ENCODE measurements at regions of chr4 and their contacts with region 1.

Region 1: GRCh38 chr4:121736735-121737351 is 28.1 kb downstream of the SMIM43 start:
- DNase-seq: peak in 1 of 4 donors; percentile 46
- ATAC-seq: peak; percentile 67
- H3K4me3 ChIP-seq: no peak overlapping the region
- H3K27ac ChIP-seq: no peak overlapping the region
- H3K4me1 ChIP-seq: no peaks in the 10 kb centered on the region
- H3K27me3 ChIP-seq: no peaks in the 10 kb centered on the region
- CTCF ChIP-seq: peak; percentile 4 to 44

Region 2: DNA sequence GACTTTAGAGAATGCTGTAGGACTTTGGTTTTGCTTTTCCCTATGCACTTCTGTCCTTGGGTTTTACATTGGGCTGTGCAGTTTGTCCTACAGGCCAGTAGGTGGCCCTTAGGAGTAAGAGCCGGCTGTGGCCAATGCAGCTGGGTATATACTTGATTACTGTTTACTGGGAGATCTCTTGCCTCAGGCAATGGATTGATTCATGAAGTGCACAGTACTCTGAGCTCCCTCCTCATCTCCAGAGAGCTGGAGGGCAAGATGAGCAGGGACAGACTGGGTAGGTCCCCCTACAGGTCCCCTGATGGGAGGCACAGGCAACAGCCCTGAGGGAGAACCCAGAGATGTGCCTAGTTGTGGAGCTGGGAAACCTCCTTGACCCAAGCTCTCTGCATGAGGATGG is 252.2 kb before region 1 on chr4:
- intact Hi-C with region 1: loop called in 1 of 2 experiments (anchors 10 kb)
- DNase-seq: peak in 1 of 4 donors; percentile 7
- ATAC-seq: peak; percentile 99
- H3K4me3 ChIP-seq: no peak overlapping the region
- H3K27ac ChIP-seq: no peak overlapping the region
- H3K4me1 ChIP-seq: no peaks in the 10 kb centered on the region
- H3K27me3 ChIP-seq: no peaks in the 10 kb centered on the region
- CTCF ChIP-seq: peak; percentile 71 to 88